ENCODE measurements at regions of chrX and their contacts with region 1.

Region 1: GRCh38 chrX:2640275-2641150 is 50.6 kb upstream of the CD99 start:
- DNase-seq: no peak
- ATAC-seq: no peak
- H3K4me3 ChIP-seq: no peak overlapping the region
- H3K27ac ChIP-seq: no peak overlapping the region
- H3K4me1 ChIP-seq: no peaks in the 10 kb centered on the region
- H3K27me3 ChIP-seq: no peaks in the 10 kb centered on the region
- CTCF ChIP-seq: no peak
- EP300 ChIP-seq: no peak
- POLR2A ChIP-seq: no peak
- RAD21 ChIP-seq: no peak

Region 2: DNA sequence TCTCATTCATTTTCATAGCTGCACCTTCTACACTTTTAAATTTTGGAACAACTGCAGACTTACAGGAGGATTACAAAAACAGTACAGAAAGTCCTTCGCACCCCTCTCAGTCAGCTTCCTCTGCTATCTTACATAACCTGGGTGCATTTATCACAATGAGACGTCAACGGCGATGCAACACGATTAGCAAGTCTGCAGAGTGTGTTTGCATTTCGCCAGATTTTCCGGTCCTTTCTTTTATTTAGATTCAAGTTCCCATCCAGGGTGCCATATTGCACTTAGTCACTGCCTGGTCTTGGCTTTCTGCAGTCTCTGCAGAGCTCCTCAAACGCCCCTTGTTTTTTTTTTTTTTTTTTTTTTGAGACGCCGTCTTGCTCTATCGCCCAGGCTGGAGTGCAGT is 939.8 kb before region 1 on chrX:
- CTCF ChIA-PET with region 1: no interaction called
- POLR2A ChIA-PET with region 1: no interaction called
- RAD21 ChIA-PET with region 1: no interaction called
- SMC1A ChIA-PET with region 1: no interaction called
- in situ Hi-C with region 1: no loop called
- intact Hi-C with region 1: no loop called
- DNase-seq: no peak
- ATAC-seq: no peak
- H3K4me3 ChIP-seq: no peak overlapping the region
- H3K27ac ChIP-seq: no peak overlapping the region
- H3K4me1 ChIP-seq: no peaks in the 10 kb centered on the region
- H3K27me3 ChIP-seq: no peaks in the 10 kb centered on the region
- CTCF ChIP-seq: no peak
- EP300 ChIP-seq: no peak
- POLR2A ChIP-seq: no peak
- RAD21 ChIP-seq: no peak

Region 3: DNA sequence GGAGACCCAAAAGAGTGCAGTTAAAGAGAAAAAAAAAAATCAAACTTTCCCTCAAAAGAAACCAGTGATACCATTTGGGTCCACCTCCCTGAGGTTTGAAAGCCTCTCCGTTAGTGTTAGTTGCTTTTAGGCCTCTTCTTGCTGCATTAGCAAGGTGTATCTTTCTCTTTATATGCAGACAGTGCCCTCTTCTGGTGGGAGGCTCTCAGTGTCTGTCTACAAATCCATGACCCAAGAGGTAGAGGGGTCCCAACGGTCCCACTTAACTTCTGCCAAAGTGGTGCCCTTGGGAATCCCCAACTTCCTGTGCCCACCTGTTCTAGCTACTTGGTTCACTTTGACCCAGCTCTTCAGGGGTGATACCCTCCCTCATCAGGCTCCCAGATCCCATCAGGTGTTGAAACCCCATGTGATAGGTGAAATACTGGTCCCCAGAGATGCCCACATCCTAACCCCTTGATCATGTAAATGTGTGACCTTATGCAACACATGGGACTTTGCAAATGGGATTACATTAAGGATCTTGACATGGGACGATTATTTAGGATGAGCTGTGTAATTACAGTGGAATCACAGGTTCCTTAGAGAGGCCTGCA is 13.1 kb before region 1 on chrX:
- CTCF ChIA-PET with region 1: no interaction called
- POLR2A ChIA-PET with region 1: no interaction called
- RAD21 ChIA-PET with region 1: no interaction called
- SMC1A ChIA-PET with region 1: no interaction called
- in situ Hi-C with region 1: no loop called
- intact Hi-C with region 1: no loop called
- DNase-seq: no peak
- ATAC-seq: peak; percentile 99
- H3K4me3 ChIP-seq: no peak overlapping the region
- H3K27ac ChIP-seq: no peak overlapping the region
- H3K4me1 ChIP-seq: no peaks in the 10 kb centered on the region
- H3K27me3 ChIP-seq: no peaks in the 10 kb centered on the region
- CTCF ChIP-seq: peak; percentile 67 to 69 (median 69)
- EP300 ChIP-seq: no peak
- POLR2A ChIP-seq: no peak
- RAD21 ChIP-seq: peak; percentile 83

Region 4: GRCh38 chrX:2811271-2811670 is 170.8 kb after region 1 on chrX:
- CTCF ChIA-PET with region 1: no interaction called
- POLR2A ChIA-PET with region 1: no interaction called
- RAD21 ChIA-PET with region 1: no interaction called
- SMC1A ChIA-PET with region 1: no interaction called
- in situ Hi-C with region 1: loop called (anchors 5 kb)
- intact Hi-C with region 1: loop called (anchors 1 kb)
- DNase-seq: no peak
- ATAC-seq: no peak
- H3K4me3 ChIP-seq: no peak overlapping the region
- H3K27ac ChIP-seq: no peak overlapping the region
- H3K4me1 ChIP-seq: no peaks in the 10 kb centered on the region
- H3K27me3 ChIP-seq: no peaks in the 10 kb centered on the region
- CTCF ChIP-seq: no peak
- EP300 ChIP-seq: no peak
- POLR2A ChIP-seq: no peak
- RAD21 ChIP-seq: no peak

Region 5: GRCh38 chrX:2819345-2820135 is 179.0 kb after region 1 on chrX:
- CTCF ChIA-PET with region 1: no interaction called
- POLR2A ChIA-PET with region 1: no interaction called
- RAD21 ChIA-PET with region 1: no interaction called
- SMC1A ChIA-PET with region 1: no interaction called
- in situ Hi-C with region 1: loop called (anchors 5 kb)
- intact Hi-C with region 1: no loop called
- DNase-seq: no peak
- ATAC-seq: peak; percentile 56
- H3K4me3 ChIP-seq: no peak overlapping the region
- H3K27ac ChIP-seq: no peak overlapping the region
- H3K4me1 ChIP-seq: no peaks in the 10 kb centered on the region
- H3K27me3 ChIP-seq: no peaks in the 10 kb centered on the region; a peak in 1 of 4 replicates
- CTCF ChIP-seq: peak; percentile 22 to 41 (median 38); a peak in 4 of 6 replicates
- EP300 ChIP-seq: no peak
- POLR2A ChIP-seq: no peak
- RAD21 ChIP-seq: peak; percentile 59

Region 6: GRCh38 chrX:2841537-2841936 is 201.0 kb after region 1 on chrX:
- CTCF ChIA-PET with region 1: no interaction called
- POLR2A ChIA-PET with region 1: no interaction called
- RAD21 ChIA-PET with region 1: no interaction called
- SMC1A ChIA-PET with region 1: no interaction called
- in situ Hi-C with region 1: no loop called
- intact Hi-C with region 1: no loop called
- DNase-seq: no peak
- ATAC-seq: no peak
- H3K4me3 ChIP-seq: no peak overlapping the region
- H3K27ac ChIP-seq: no peak overlapping the region
- H3K4me1 ChIP-seq: no peaks in the 10 kb centered on the region
- H3K27me3 ChIP-seq: no peaks in the 10 kb centered on the region
- CTCF ChIP-seq: no peak
- EP300 ChIP-seq: no peak
- POLR2A ChIP-seq: no peak
- RAD21 ChIP-seq: no peak